ENCODE measurements at regions of chr3 and their contacts with region 1.

Region 1: DNA sequence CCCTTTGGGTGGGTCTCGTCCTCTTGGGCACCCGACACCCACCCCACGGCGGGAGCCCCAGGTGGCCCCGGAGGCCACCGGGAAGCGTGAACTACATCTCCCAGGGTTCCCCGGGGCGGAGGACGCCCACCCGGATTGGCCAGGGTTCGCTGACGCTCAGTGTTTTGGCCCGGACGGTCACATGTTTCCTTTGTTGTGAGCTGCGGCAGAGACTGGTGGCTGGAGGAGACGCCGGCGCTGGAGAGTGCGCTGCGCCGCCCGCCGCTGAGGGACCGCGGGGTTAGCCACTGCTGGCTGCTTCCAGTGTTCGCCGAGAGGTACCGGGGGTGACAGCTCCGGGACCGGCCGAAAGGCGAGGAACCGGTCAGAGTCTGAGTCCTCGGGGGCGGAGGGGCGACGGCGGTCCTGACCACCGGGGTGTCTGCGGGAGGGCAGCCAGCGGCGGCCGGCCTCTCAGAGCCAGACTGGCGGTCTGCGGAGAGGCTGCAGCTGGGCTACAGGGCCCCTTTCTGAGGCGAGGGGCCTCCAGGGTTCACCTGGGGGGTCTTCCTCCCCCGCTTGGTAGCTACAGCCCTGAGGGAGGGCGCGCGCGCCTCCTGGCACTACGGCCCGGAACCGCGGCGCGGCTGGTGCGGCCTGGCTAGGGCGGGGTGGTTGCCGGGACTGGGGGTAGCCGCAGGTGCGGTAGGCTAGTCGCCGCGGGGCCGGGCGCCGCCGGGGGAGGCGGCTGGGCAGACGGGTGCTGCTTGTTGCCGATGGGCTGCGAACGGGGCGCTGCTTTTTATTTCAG is at the start of gene KLHL24:
- DNase-seq: peak; percentile 95 to 99 (median 96)

Region 2: GRCh38 chr3:183664913-183665381 is 29.3 kb after region 1 on chr3:
- intact Hi-C with region 1: no loop called
- DNase-seq: no peak

Region 3: GRCh38 chr3:183825456-183826161 is 190.0 kb after region 1 on chr3 and contains the start of gene MAP6D1:
- intact Hi-C with region 1: loop called (anchors 10 kb)
- DNase-seq: peak; percentile 63 to 97 (median 70)

Measured in posterior cingulate gyrus (tissue), 11 donors.